ENCODE measurements at regions of chr6 and their contacts with region 1.

Region 1: DNA sequence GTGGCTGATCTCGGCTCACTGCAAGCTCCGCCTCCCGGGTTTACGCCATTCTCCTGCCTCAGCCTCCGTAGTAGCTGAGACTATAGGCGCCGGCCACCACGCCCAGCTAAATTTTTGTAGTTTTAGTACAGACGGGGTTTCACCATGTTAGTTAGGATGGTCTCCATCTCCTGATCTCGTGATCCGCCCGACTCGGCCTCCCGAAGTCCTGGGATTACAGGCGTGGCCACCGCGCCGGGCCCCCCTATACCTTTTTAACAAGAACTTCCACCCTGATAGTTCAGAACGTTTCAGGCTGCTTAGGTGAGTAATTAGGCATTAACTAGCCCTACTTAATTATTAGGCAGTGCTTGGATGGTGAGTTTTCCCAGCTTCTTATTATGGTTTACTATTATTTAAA is 552.5 kb downstream of the BCKDHB start:
- DNase-seq: no peak
- ATAC-seq: no peak
- H3K4me3 ChIP-seq: no peak overlapping the region
- H3K27ac ChIP-seq: no peak overlapping the region
- H3K4me1 ChIP-seq: no peaks in the 10 kb centered on the region
- H3K27me3 ChIP-seq: no peaks in the 10 kb centered on the region
- CTCF ChIP-seq: no peak

Region 2: GRCh38 chr6:81491454-81492101 is 832.7 kb after region 1 on chr6:
- intact Hi-C with region 1: loop called in 1 of 2 experiments (anchors 10 kb)
- DNase-seq: no peak
- ATAC-seq: no peak
- H3K4me3 ChIP-seq: no peak overlapping the region
- H3K27ac ChIP-seq: no peak overlapping the region
- H3K4me1 ChIP-seq: no peaks in the 10 kb centered on the region
- H3K27me3 ChIP-seq: no peaks in the 10 kb centered on the region
- CTCF ChIP-seq: no peak

Measured in psoas muscle (tissue), 8 donors.